ENCODE measurements at regions of chr12 and their contacts with region 1.

Region 1: DNA sequence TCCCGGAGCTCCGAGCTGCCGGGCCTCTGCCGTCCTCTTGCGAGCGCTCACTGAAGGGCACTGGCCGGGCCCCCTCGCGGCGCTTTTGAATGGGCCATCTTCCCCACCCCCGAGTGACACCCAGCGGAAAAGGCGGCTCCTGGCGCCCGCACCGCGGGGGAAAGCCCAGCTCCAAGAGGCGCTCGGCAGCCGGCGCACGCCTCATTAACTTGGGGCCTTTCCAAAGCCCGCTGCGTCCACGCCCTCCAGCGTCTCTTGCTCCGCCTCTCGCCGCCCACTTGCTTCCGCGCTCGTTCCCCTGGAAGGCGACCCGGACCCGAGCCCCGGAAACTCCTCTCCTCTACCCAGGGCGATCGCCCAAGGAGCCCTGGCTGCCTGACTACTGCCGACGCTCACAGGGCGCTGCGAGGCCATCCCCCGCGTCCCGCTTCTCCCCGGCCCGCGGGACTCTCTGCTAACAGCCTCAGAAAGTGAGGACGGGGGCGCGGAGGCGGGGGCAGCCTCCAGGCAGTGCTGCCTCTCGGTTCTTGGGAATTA is at the start of gene PHLDA1:
- DNase-seq: peak; percentile 98
- ATAC-seq: peak; percentile 86
- H3K4me3 Mint-ChIP-seq: peak within 1 kb of the TSS; percentile 97
- H3K27ac Mint-ChIP-seq: peak within 1 kb of the TSS; percentile 98
- H3K4me1 Mint-ChIP-seq: peaks cover 42% of the 10 kb centered on the region
- H3K27me3 Mint-ChIP-seq: no peaks in the 10 kb centered on the region
- CTCF ChIP-seq: peak; percentile 68
- total RNA-seq, gene PHLDA1: 33.9 to 35.0 TPM

Region 2: DNA sequence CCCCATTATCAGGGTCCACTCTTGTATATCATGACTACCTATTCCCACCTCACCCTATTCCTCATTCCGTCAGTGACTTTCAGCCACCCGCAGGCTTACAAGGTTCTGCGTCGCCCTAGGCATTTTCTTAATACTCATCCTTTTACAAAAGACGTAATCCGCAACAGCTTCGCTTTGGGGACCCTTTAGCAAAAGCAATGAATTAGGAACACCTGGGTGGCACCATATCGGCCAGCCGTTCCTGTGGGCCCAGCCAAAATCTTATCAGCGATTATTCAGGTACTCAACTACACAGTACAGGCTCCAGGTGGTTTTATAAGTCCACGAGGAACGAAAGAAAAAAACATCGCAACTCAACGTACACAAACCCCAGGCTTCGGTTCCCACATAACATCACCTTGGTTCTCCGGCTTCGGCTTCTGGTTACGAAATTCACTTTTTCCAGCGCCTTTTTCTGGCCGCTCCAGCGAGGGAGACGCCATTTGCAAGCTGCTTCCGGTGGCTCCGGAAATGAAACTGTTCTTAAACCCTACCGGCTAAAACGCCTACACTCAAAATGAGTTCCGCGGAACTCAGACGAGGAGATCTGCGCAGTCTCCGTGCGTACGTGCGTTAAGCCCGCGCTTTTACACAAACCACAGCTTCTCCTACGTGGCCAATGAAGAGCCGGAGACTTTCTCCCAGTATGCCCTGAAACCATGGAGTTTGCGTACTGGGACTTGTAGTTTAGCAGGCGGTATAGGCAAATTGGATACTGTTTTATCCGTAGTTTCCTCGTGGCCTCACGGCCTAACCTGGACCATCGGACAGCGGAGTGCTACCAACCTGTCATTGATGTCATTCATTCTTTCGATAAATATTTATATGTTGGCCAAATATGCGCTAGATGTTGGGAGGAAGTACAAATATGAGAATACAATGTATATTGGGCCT is 520.2 kb before region 1 on chr12 and contains the start of gene KRR1:
- CTCF ChIA-PET with region 1: interaction called, 11 read pairs
- POLR2A ChIA-PET with region 1: interaction called, 9 read pairs
- intact Hi-C with region 1: no loop called
- DNase-seq: peak; percentile 95
- ATAC-seq: peak; percentile 97
- H3K4me3 Mint-ChIP-seq: peak within 1 kb of the TSS; percentile 99
- H3K27ac Mint-ChIP-seq: peak within 1 kb of the TSS; percentile 100
- H3K4me1 Mint-ChIP-seq: peaks cover 33% of the 10 kb centered on the region
- H3K27me3 Mint-ChIP-seq: no peaks in the 10 kb centered on the region
- CTCF ChIP-seq: no peak
- total RNA-seq, gene KRR1: 113 to 121 TPM

Region 3: GRCh38 chr12:75712252-75712651 is 319.4 kb before region 1 on chr12:
- CTCF ChIA-PET with region 1: interaction called, 5 read pairs
- POLR2A ChIA-PET with region 1: interaction called, 5 read pairs
- intact Hi-C with region 1: loop called (anchors 10 kb)
- DNase-seq: no peak
- ATAC-seq: peak; percentile 39
- H3K4me3 Mint-ChIP-seq: no peak overlapping the region
- H3K27ac Mint-ChIP-seq: no peak overlapping the region
- H3K4me1 Mint-ChIP-seq: peaks cover 15% of the 10 kb centered on the region
- H3K27me3 Mint-ChIP-seq: peaks cover 4% of the 10 kb centered on the region
- CTCF ChIP-seq: no peak

Region 4: DNA sequence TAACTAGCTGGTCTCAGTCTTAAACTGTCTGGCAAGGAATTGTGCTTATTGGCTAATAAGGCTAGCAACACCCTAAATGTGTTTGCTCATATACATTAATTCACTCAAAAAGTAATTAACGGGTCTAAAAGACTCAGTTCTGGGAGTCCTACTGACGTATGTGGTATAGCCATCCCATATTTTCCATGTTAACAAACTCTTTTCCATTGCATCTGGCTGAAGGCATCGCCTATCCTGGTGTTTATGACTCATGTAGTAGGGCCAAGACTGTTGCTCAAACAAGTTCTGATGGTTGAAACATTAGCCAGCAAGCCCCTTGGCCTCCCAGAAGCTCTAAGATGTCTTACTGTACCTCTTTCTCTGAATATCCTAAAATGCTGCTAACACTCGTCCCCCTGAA is 98.5 kb before region 1 on chr12:
- CTCF ChIA-PET with region 1: interaction called, 16 read pairs
- POLR2A ChIA-PET with region 1: interaction called, 33 read pairs
- intact Hi-C with region 1: no loop called
- DNase-seq: no peak
- ATAC-seq: no peak
- H3K4me3 Mint-ChIP-seq: no peak overlapping the region
- H3K27ac Mint-ChIP-seq: no peak overlapping the region
- H3K4me1 Mint-ChIP-seq: peaks cover 34% of the 10 kb centered on the region
- H3K27me3 Mint-ChIP-seq: peaks cover 3% of the 10 kb centered on the region
- CTCF ChIP-seq: no peak

Region 5: DNA sequence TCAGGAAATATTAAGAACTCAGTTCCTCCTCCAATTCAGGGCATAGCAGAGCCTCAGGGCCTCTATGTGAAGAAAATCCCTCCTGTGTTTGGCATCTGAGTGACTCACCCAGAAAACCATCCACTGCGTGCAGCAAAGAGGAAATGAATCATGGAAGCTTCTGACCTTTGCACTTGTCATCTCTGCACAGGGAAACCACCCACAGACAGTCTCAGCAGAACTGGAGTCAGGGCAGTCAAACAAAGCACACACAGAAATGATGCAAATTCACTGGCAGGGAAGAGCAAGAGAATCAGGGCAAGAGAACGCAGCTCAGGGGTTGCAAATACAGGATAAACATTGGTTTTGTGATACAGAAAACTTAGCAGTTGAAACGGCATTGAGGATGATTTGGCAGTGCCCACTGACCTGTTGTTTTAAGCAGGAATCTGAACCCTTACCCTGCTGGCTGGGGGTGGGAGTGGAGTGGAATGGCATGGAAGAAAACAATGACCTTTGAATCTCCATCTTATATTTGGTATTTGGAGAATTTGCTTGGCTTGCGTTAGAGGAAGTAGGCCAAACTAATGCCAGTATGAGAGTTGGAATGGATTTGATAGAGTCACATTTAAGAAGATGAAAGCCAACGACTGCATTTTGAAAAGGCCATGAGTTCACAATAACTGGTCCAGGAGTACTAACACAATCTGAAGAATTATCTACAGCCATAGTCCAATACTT is 53.5 kb before region 1 on chr12:
- CTCF ChIA-PET with region 1: interaction called, 14 read pairs
- POLR2A ChIA-PET with region 1: interaction called, 54 read pairs
- intact Hi-C with region 1: loop called (anchors 2 kb)
- DNase-seq: peak; percentile 88
- ATAC-seq: peak; percentile 77
- H3K4me3 Mint-ChIP-seq: peak overlapping the region; percentile 56
- H3K27ac Mint-ChIP-seq: peak overlapping the region; percentile 99
- H3K4me1 Mint-ChIP-seq: peaks cover 77% of the 10 kb centered on the region
- H3K27me3 Mint-ChIP-seq: no peaks in the 10 kb centered on the region
- CTCF ChIP-seq: no peak

Region 6: GRCh38 chr12:76010732-76011458 is 20.7 kb before region 1 on chr12:
- CTCF ChIA-PET with region 1: no interaction called
- POLR2A ChIA-PET with region 1: no interaction called
- intact Hi-C with region 1: no loop called
- DNase-seq: no peak
- ATAC-seq: no peak
- H3K4me3 Mint-ChIP-seq: no peak overlapping the region
- H3K27ac Mint-ChIP-seq: no peak overlapping the region
- H3K4me1 Mint-ChIP-seq: peaks cover 14% of the 10 kb centered on the region
- H3K27me3 Mint-ChIP-seq: peaks cover 5% of the 10 kb centered on the region
- CTCF ChIP-seq: no peak

Measured in activated CD8-positive, alpha-beta T cell treated with anti-CD3 and anti-CD28 coated beads for 36 hours (primary cell).